Ovary (tissue), 10 donors: ENCODE measurements at regions of chr14 and their contacts with region 1.

Region 1: GRCh38 chr14:67285876-67286452 is 44.7 kb downstream of the PALS1 start:
- DNase-seq: no peak
- H3K4me3 ChIP-seq: no peak overlapping the region
- H3K27ac ChIP-seq: no peak overlapping the region
- H3K4me1 ChIP-seq: no peaks in the 10 kb centered on the region
- H3K27me3 ChIP-seq: no peaks in the 10 kb centered on the region
- CTCF ChIP-seq: peak; percentile 25 to 41 (median 31)
- EP300 ChIP-seq: no peak
- POLR2A ChIP-seq: no peak

Region 2: GRCh38 chr14:67166450-67166853 is 119.5 kb before region 1 on chr14:
- intact Hi-C with region 1: loop called (anchors 5 to 10 kb)
- DNase-seq: peak in 3 of 5 donors; percentile 16 to 40 (median 36)
- H3K4me3 ChIP-seq: no peak overlapping the region
- H3K27ac ChIP-seq: no peak overlapping the region
- H3K4me1 ChIP-seq: no peaks in the 10 kb centered on the region
- H3K27me3 ChIP-seq: no peaks in the 10 kb centered on the region
- CTCF ChIP-seq: peak; percentile 36 to 48 (median 48)
- EP300 ChIP-seq: no peak
- POLR2A ChIP-seq: no peak

Region 3: GRCh38 chr14:67240978-67241414 is 45.0 kb before region 1 on chr14:
- intact Hi-C with region 1: no loop called
- DNase-seq: peak; percentile 94 to 97 (median 95)
- H3K4me3 ChIP-seq: peak overlapping the region; percentile 76
- H3K27ac ChIP-seq: peak overlapping the region; percentile 90 to 95
- H3K4me1 ChIP-seq: no peaks in the 10 kb centered on the region
- H3K27me3 ChIP-seq: no peaks in the 10 kb centered on the region
- CTCF ChIP-seq: no peak
- EP300 ChIP-seq: no peak
- POLR2A ChIP-seq: no peak